ENCODE measurements at regions of chr15 and their contacts with region 1.

Region 1: GRCh38 chr15:40044717-40045571 is 6.0 kb upstream of the SRP14 start:
- DNase-seq: peak; percentile 76
- ATAC-seq: peak; percentile 99
- H3K4me3 ChIP-seq: no peak overlapping the region
- H3K27ac ChIP-seq: no peak overlapping the region
- H3K4me1 ChIP-seq: peaks cover 20% of the 10 kb centered on the region
- H3K27me3 ChIP-seq: no peaks in the 10 kb centered on the region
- CTCF ChIP-seq: peak; percentile 99
- POLR2A ChIP-seq: peak; percentile 74
- RAD21 ChIP-seq: peak; percentile 100

Region 2: DNA sequence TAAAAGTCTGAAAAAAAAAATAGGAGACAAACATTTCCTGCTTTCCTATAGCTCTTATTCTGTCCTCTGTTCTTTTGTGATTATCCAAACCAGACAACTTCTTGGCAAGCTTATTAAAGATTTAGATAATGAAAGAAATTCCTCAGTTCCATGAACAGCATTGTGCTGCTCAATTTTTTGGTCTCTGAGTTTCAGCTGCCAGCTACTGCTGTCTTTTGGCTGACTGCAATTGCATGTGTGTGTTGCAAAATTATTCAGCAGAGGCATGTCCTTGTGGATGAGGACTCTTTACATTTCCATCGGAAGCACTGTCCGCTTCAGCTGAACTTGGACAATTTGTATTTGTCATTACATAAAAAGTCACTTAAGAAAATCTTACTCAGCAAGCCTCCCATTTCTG is 1083.0 kb before region 1 on chr15:
- CTCF ChIA-PET with region 1: no interaction called
- POLR2A ChIA-PET with region 1: no interaction called
- dilution Hi-C with region 1: no loop called
- in situ Hi-C with region 1: no loop called
- intact Hi-C with region 1: no loop called
- DNase-seq: peak; percentile 3
- ATAC-seq: no peak
- H3K4me3 ChIP-seq: no peak overlapping the region
- H3K27ac ChIP-seq: no peak overlapping the region
- H3K4me1 ChIP-seq: no peaks in the 10 kb centered on the region
- H3K27me3 ChIP-seq: no peaks in the 10 kb centered on the region
- CTCF ChIP-seq: no peak
- POLR2A ChIP-seq: no peak
- RAD21 ChIP-seq: no peak

Region 3: DNA sequence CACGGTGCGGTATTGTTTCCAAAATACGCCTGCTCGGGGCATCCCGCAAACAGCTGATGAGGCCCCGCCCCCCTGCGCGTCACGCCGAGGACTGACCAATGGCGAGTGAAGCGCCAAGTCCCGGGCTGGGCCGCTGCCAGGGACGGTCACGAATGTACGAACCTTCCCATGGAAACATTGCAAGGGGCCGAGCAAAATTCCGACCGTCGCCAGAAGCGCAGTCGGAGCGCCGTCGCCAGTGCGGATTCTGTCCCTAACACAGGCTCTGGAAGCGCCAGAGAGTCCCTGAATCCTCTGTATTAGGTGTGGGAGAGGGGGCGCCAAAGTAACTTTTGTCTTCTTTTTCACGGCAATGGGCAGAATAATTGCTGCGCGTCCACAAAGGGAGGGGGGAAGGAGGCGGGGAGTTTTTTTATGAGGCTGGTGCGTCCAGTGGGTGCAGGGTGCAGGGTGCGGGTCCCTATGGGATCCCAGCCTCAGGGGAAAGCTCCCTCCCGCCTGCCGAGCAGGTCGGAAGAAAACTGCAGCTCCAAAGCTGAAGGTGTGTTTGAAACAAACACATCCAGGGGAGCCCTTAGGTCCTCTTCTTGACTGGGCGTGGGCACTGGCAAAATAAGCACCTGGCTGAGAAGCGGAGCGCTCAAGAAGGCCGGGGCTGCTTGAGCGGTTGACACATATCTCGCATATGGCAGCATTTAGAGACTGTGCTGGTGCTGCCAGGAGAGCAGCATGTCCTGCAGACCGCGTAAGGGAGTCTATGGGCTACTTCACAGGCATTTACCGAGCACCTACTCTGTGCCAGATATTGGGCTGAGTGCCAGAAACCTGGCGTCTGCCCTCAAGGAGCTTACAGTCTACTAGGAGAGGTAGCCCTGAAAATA is 64.2 kb after region 1 on chr15 and contains the start of gene BMF:
- CTCF ChIA-PET with region 1: interaction called, 26 read pairs
- POLR2A ChIA-PET with region 1: interaction called, 3 read pairs
- dilution Hi-C with region 1: no loop called
- in situ Hi-C with region 1: no loop called
- intact Hi-C with region 1: loop called (anchors 2 kb)
- DNase-seq: peak; percentile 99
- ATAC-seq: peak; percentile 84
- H3K4me3 ChIP-seq: peak within 1 kb of the TSS; percentile 63
- H3K27ac ChIP-seq: no peak within 1 kb of the TSS; the same call in 1 of the 2 replicates
- H3K4me1 ChIP-seq: peaks cover 19% of the 10 kb centered on the region
- H3K27me3 ChIP-seq: peaks cover 17% of the 10 kb centered on the region
- CTCF ChIP-seq: peak; percentile 40
- POLR2A ChIP-seq: no peak; the same call in 1 of the 2 replicates
- RAD21 ChIP-seq: 0 out of 2 replicates have a peak, but pooled peaks have one; percentile 25
- total RNA-seq, gene BMF: 1.7 and 2.9 TPM in 2 replicates

Region 4: GRCh38 chr15:40160689-40161688 is 116.0 kb after region 1 on chr15 and contains the start of gene BUB1B:
- CTCF ChIA-PET with region 1: interaction called, 3 read pairs
- POLR2A ChIA-PET with region 1: no interaction called
- dilution Hi-C with region 1: no loop called
- in situ Hi-C with region 1: loop called (anchors 5 kb)
- intact Hi-C with region 1: loop called (anchors 5 kb)
- DNase-seq: peak; percentile 87
- ATAC-seq: peak; percentile 99
- H3K4me3 ChIP-seq: peak within 1 kb of the TSS; percentile 73
- H3K27ac ChIP-seq: peak within 1 kb of the TSS; percentile 52; the same call in 1 of the 2 replicates
- H3K4me1 ChIP-seq: no peaks in the 10 kb centered on the region
- H3K27me3 ChIP-seq: no peaks in the 10 kb centered on the region
- CTCF ChIP-seq: no peak
- POLR2A ChIP-seq: no peak
- RAD21 ChIP-seq: no peak
- total RNA-seq, gene BUB1B: 24.7 and 31.9 TPM in 2 replicates

Region 5: DNA sequence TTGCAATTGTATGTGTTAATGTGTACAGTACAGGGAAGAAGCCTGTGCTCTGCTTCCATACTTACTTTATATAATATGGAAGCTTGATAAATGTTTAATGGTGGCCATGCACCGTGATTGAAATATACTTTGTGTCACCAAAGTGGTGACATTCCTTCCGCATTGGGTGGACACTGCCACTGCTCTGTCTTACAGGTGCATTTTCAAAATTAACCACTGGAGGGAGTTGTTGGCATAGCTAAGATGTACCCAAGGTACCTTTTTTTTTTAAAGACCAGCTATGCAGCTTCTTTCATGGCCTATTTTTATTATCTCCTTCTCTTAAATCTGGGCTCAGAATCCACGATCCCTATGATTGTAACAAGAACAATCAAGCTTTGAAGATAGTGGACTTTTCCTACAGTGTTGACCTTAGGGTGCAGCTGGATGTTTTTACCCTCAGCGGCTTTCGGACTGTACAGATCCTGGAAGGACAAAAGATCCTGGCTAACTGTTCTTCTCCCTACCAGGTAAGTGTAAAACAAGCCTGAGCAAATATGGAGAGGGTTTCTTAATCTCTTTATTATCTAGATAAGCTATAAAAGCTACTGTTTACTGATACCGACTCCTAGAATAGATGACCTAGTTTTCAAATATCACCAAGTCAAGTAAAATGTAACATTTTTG is 172.3 kb after region 1 on chr15:
- CTCF ChIA-PET with region 1: interaction called, 9 read pairs
- POLR2A ChIA-PET with region 1: no interaction called
- dilution Hi-C with region 1: no loop called
- in situ Hi-C with region 1: no loop called
- intact Hi-C with region 1: loop called (anchors 1 kb)
- DNase-seq: peak; percentile 70
- ATAC-seq: peak; percentile 92
- H3K4me3 ChIP-seq: no peak overlapping the region
- H3K27ac ChIP-seq: no peak overlapping the region
- H3K4me1 ChIP-seq: no peaks in the 10 kb centered on the region
- H3K27me3 ChIP-seq: no peaks in the 10 kb centered on the region
- CTCF ChIP-seq: peak; percentile 95
- POLR2A ChIP-seq: no peak
- RAD21 ChIP-seq: peak; percentile 96